Activated naive CD8-positive, alpha-beta T cell treated with anti-CD3 and anti-CD28 coated beads, Interleukin-2, amount 10 ng/mL, durations not matched to agents 7 days and 5 days (primary cell): ENCODE measurements at regions of chr20 and their contacts with region 1.

Region 1: GRCh38 chr20:2508631-2509467 is at the start of gene ZNF343:
- DNase-seq: peak; percentile 77
- ATAC-seq: peak; percentile 92
- H3K4me3 Mint-ChIP-seq: peak within 1 kb of the TSS; percentile 99
- H3K27ac Mint-ChIP-seq: peak within 1 kb of the TSS; percentile 99
- H3K4me1 Mint-ChIP-seq: peaks cover 10% of the 10 kb centered on the region
- H3K27me3 Mint-ChIP-seq: peaks cover 27% of the 10 kb centered on the region
- total RNA-seq, gene ZNF343: 10.4 to 12.0 TPM

Region 2: DNA sequence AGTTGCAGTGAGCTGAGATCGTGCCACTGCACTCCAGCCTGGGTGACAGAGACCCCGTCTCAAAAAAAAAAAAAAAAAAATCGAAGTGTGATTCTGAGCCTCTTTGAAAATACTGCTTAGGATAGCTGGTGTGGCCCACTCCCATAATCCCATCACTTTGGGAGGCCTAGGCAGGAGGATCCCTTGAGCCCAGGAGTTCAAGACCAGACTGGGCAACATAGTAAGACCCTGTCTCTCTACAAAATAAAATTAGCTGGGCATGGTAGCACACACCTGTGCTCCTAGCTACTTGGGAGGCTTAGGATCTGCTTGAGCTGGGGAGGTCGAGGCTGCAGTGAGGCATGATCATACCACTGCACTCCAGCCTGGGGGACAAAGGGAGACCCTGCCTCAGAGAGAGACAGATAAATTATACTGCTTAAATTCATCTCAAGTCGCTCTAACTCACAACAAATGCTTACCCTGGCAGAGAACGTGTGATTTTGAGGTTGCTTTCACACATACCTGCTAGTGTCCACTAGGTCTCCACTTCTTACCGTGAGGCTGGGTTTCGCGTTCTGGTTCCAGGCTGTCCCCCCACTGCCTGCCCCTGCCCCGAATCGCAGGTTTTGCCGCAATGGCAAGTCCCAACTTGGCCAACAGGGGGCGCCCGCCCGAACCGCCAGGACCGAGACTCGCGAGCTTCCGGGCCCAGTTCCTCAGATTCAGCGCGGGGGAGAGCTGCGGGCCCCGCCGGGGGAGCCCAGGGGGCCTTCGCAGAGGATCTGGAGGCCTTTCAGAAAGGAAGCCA is 15.3 kb after region 1 on chr20:
- POLR2A ChIA-PET with region 1: interaction called, 13 read pairs
- DNase-seq: peak; percentile 96
- ATAC-seq: peak; percentile 77
- H3K4me3 Mint-ChIP-seq: peak overlapping the region; percentile 82
- H3K27ac Mint-ChIP-seq: peak overlapping the region; percentile 89
- H3K4me1 Mint-ChIP-seq: peaks cover 18% of the 10 kb centered on the region
- H3K27me3 Mint-ChIP-seq: peaks cover 10% of the 10 kb centered on the region